Activated T-helper 1 cell treated with anti-CD3 and anti-CD28 coated beads, Interleukin-12 subunit alpha, Interleukin-12 subunit beta, Interleukin-2, Interleukin-4 antibody, amounts not matched to agents 30 ng/mL and 10 ng/mL and 1 ng/mL, durations not matched to agents 14 hours and 24 hours and 36 hours (primary cell): ENCODE measurements at regions of chr16 and their contacts with region 1.

Region 1: GRCh38 chr16:58755989-58756649 is 22.0 kb upstream of the GOT2 start:
- DNase-seq: peak; percentile 65
- H3K4me3 Mint-ChIP-seq: peak overlapping the region; percentile 32
- H3K27ac Mint-ChIP-seq: peak overlapping the region; percentile 53
- H3K4me1 Mint-ChIP-seq: peaks cover 10% of the 10 kb centered on the region
- H3K27me3 Mint-ChIP-seq: peaks cover 5% of the 10 kb centered on the region

Region 2: GRCh38 chr16:58336332-58337089 is 419.6 kb before region 1 on chr16:
- intact Hi-C with region 1: loop called (anchors 1 kb)
- DNase-seq: peak; percentile 72
- H3K4me3 Mint-ChIP-seq: no peak overlapping the region
- H3K27ac Mint-ChIP-seq: no peak overlapping the region
- H3K4me1 Mint-ChIP-seq: no peaks in the 10 kb centered on the region
- H3K27me3 Mint-ChIP-seq: no peaks in the 10 kb centered on the region

Region 3: GRCh38 chr16:58515125-58515870 is 240.8 kb before region 1 on chr16 and contains the start of gene SETD6:
- intact Hi-C with region 1: loop called (anchors 1 kb)
- DNase-seq: peak; percentile 77
- H3K4me3 Mint-ChIP-seq: peak within 1 kb of the TSS; percentile 92
- H3K27ac Mint-ChIP-seq: peak within 1 kb of the TSS; percentile 83
- H3K4me1 Mint-ChIP-seq: peaks cover 36% of the 10 kb centered on the region
- H3K27me3 Mint-ChIP-seq: no peaks in the 10 kb centered on the region
- total RNA-seq, gene SETD6: 32.1 and 34.9 TPM in 2 replicates

Region 4: GRCh38 chr16:58684354-58685083 is 71.6 kb before region 1 on chr16 and contains the start of gene SLC38A7:
- intact Hi-C with region 1: loop called (anchors 2 kb)
- DNase-seq: peak; percentile 72
- H3K4me3 Mint-ChIP-seq: peak within 1 kb of the TSS; percentile 90
- H3K27ac Mint-ChIP-seq: peak within 1 kb of the TSS; percentile 77
- H3K4me1 Mint-ChIP-seq: peaks cover 14% of the 10 kb centered on the region
- H3K27me3 Mint-ChIP-seq: peaks cover 7% of the 10 kb centered on the region
- total RNA-seq, gene SLC38A7: 9.3 and 11.8 TPM in 2 replicates

Region 5: GRCh38 chr16:58741166-58741565 is 15.0 kb before region 1 on chr16:
- intact Hi-C with region 1: no loop called
- DNase-seq: no peak
- H3K4me3 Mint-ChIP-seq: no peak overlapping the region
- H3K27ac Mint-ChIP-seq: no peak overlapping the region
- H3K4me1 Mint-ChIP-seq: no peaks in the 10 kb centered on the region
- H3K27me3 Mint-ChIP-seq: peaks cover 14% of the 10 kb centered on the region

Region 6: GRCh38 chr16:58828901-58829545 is 72.9 kb after region 1 on chr16:
- intact Hi-C with region 1: no loop called
- DNase-seq: no peak
- H3K4me3 Mint-ChIP-seq: no peak overlapping the region
- H3K27ac Mint-ChIP-seq: no peak overlapping the region
- H3K4me1 Mint-ChIP-seq: no peaks in the 10 kb centered on the region
- H3K27me3 Mint-ChIP-seq: no peaks in the 10 kb centered on the region

Region 7: DNA sequence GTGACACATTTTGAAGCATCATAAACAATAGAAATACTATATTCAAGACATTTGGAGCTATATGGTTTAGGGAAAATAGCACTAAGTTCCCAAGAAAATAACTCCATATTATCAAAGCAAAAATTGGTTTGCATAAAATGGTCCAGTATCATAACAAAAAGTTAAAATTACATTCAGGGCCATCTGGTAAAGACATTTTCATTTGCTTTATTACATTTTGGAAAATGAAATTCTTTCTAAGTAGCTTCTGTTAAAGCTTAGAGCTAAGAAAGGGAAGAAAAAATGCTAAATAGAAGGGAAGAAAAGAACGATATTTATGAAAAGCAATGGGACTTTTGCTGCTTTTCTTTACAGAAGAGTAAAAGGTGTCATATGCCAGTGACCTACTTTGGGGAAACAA is 133.4 kb after region 1 on chr16:
- intact Hi-C with region 1: no loop called
- DNase-seq: no peak
- H3K4me3 Mint-ChIP-seq: no peak overlapping the region
- H3K27ac Mint-ChIP-seq: no peak overlapping the region
- H3K4me1 Mint-ChIP-seq: no peaks in the 10 kb centered on the region
- H3K27me3 Mint-ChIP-seq: no peaks in the 10 kb centered on the region